ENCODE measurements at regions of chr6 and their contacts with region 1.

Region 1: DNA sequence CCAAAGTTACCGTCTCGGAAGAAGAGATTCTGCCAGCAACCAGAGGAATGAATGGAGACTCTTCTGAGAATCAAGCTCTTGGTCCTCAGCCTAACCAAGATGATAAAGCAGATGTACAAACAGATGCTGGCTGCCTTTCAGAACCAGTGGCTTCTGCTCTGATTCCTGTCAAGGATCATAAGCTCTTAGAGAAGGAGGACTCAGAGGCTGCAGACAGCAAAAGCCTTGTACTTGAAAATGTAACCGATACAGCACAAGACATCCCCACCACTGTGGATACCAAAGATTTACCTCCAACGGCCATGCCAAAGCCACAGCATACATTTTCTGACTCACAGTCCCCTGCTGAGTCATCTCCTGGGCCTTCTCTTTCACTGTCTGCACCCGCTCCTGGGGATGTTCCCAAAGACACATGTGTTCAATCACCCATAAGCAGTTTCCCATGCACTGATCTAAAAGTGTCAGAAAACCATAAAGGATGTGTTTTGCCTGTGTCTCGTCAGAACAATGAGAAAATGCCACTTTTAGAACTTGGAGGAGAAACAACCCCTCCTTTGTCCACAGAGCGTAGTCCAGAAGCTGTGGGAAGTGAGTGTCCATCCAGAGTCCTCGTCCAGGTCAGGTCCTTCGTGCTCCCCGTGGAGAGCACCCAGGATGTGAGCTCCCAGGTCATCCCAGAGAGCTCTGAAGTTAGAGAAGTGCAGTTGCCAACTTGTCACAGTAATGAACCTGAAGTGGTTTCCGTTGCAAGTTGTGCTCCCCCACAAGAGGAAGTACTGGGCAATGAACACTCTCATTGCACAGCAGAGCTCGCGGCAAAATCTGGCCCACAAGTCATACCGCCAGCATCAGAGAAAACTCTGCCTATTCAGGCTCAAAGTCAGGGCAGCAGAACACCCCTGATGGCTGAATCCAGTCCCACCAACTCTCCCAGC is 109.6 kb downstream of the RTN4IP1 start:
- DNase-seq: peak; percentile 93
- H3K4me3 Mint-ChIP-seq: peak overlapping the region; percentile 77
- H3K27ac Mint-ChIP-seq: peak overlapping the region; percentile 99
- H3K4me1 Mint-ChIP-seq: peaks cover 71% of the 10 kb centered on the region
- H3K27me3 Mint-ChIP-seq: no peaks in the 10 kb centered on the region

Region 2: GRCh38 chr6:105981002-105981887 is 538.5 kb before region 1 on chr6:
- CTCF ChIA-PET with region 1: no interaction called
- intact Hi-C with region 1: loop called (anchors 2 kb)
- DNase-seq: peak; percentile 58
- H3K4me3 Mint-ChIP-seq: peak overlapping the region; percentile 62
- H3K27ac Mint-ChIP-seq: peak overlapping the region; percentile 79
- H3K4me1 Mint-ChIP-seq: peaks cover 26% of the 10 kb centered on the region
- H3K27me3 Mint-ChIP-seq: peaks cover 52% of the 10 kb centered on the region

Region 3: DNA sequence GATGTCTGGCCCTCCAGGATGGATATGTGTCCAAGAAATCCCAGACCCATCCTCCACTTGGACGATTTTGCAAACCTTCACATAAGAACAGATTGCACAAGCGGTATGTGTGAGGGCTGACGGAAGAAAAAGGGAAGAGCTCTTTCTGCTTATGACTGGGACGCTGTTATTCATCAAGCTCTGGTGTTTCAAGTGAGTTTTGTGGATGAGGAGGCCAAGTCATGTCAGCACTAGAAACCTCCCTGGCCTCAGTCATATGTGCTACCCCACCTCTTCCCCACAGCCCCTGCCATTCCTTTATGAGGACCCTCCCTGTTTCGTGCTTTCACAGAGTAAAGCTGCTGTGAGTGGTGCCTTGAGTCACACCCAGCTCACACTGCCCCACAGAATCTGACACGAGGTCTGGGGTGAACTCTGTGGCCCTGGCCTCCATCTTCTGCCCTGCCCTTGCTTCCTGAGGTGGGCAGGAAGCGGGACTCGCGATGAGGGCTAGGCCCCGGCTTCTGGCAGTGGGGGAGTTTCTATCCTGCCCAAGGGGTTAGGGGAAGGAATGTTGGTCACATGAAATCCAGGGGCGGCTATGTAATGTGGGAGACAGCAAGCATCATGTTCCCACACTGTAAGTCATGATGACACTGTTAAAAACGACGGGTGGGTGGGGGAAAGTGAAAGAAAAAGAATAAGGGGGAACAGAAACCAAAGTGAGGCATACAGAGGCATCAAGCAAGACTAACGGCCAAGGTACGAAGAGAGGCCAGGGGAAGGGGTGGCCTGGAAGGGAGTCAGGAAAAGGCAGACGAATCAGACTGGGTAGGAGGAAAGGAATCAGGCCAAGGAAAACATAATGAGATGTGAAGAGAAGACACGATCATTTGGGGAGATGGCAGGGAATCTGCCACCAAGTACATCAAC is 355.5 kb before region 1 on chr6:
- CTCF ChIA-PET with region 1: no interaction called
- intact Hi-C with region 1: loop called (anchors 1 kb)
- DNase-seq: peak; percentile 80
- H3K4me3 Mint-ChIP-seq: peak overlapping the region; percentile 36
- H3K27ac Mint-ChIP-seq: peak overlapping the region; percentile 78
- H3K4me1 Mint-ChIP-seq: peaks cover 35% of the 10 kb centered on the region
- H3K27me3 Mint-ChIP-seq: peaks cover 2% of the 10 kb centered on the region

Region 4: GRCh38 chr6:106534564-106534982 is 14.8 kb after region 1 on chr6:
- CTCF ChIA-PET with region 1: interaction called, 8 read pairs
- intact Hi-C with region 1: loop called (anchors 1 kb)
- DNase-seq: peak; percentile 85
- H3K4me3 Mint-ChIP-seq: no peak overlapping the region
- H3K27ac Mint-ChIP-seq: peak overlapping the region; percentile 81
- H3K4me1 Mint-ChIP-seq: peaks cover 77% of the 10 kb centered on the region
- H3K27me3 Mint-ChIP-seq: no peaks in the 10 kb centered on the region

Region 5: GRCh38 chr6:106556368-106556960 is 36.7 kb after region 1 on chr6:
- CTCF ChIA-PET with region 1: interaction called, 8 read pairs
- intact Hi-C with region 1: loop called (anchors 1 kb)
- DNase-seq: no peak
- H3K4me3 Mint-ChIP-seq: no peak overlapping the region
- H3K27ac Mint-ChIP-seq: no peak overlapping the region
- H3K4me1 Mint-ChIP-seq: peaks cover 18% of the 10 kb centered on the region
- H3K27me3 Mint-ChIP-seq: no peaks in the 10 kb centered on the region

Region 6: DNA sequence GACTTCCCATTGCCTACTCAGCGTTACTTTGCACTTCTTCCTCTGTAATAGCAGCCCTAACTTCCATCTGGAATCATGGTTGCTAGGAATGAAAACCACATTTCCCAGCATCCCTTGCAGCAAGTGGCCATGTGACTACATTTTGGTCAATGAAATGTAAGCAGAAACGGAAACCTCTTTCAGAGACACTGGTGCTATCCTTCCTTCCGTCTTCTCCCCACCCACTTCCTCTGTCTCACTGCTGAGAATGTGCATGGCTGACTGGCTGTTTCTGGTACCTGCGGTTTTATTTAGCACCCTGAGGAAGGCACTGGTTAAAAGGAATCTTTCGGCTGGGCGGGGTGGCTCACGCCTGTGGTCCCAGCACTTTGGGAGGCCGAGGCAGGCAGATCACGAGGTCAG is 1197.0 kb after region 1 on chr6:
- CTCF ChIA-PET with region 1: no interaction called
- intact Hi-C with region 1: loop called (anchors 2 kb)
- DNase-seq: peak; percentile 89
- H3K4me3 Mint-ChIP-seq: peak overlapping the region; percentile 71
- H3K27ac Mint-ChIP-seq: peak overlapping the region; percentile 93
- H3K4me1 Mint-ChIP-seq: peaks cover 65% of the 10 kb centered on the region
- H3K27me3 Mint-ChIP-seq: no peaks in the 10 kb centered on the region

Region 7: GRCh38 chr6:107820338-107821261 is 1300.9 kb after region 1 on chr6:
- CTCF ChIA-PET with region 1: no interaction called
- intact Hi-C with region 1: loop called (anchors 1 kb)
- DNase-seq: peak; percentile 55
- H3K4me3 Mint-ChIP-seq: peak overlapping the region; percentile 88
- H3K27ac Mint-ChIP-seq: peak overlapping the region; percentile 98
- H3K4me1 Mint-ChIP-seq: peaks cover 83% of the 10 kb centered on the region
- H3K27me3 Mint-ChIP-seq: no peaks in the 10 kb centered on the region

Measured in activated naive CD4-positive, alpha-beta T cell treated with anti-CD3 and anti-CD28 coated beads for 36 hours (primary cell).